Heart left ventricle (tissue), 16 donors: ENCODE measurements at regions of chr17 and their contacts with region 1.

Region 1: GRCh38 chr17:64968652-64969501 is 49.6 kb upstream of the LRRC37A3 start:
- DNase-seq: no peak
- ATAC-seq: no peak
- H3K4me3 ChIP-seq: no peak overlapping the region
- H3K27ac ChIP-seq: peak overlapping the region in 1 of 12 donors; percentile 74
- H3K4me1 ChIP-seq: peaks cover 0 to 33% (median 8%) of the 10 kb centered on the region in 12 donors
- H3K27me3 ChIP-seq: no peaks in the 10 kb centered on the region
- CTCF ChIP-seq: no peak
- POLR2A ChIP-seq: no peak

Region 2: DNA sequence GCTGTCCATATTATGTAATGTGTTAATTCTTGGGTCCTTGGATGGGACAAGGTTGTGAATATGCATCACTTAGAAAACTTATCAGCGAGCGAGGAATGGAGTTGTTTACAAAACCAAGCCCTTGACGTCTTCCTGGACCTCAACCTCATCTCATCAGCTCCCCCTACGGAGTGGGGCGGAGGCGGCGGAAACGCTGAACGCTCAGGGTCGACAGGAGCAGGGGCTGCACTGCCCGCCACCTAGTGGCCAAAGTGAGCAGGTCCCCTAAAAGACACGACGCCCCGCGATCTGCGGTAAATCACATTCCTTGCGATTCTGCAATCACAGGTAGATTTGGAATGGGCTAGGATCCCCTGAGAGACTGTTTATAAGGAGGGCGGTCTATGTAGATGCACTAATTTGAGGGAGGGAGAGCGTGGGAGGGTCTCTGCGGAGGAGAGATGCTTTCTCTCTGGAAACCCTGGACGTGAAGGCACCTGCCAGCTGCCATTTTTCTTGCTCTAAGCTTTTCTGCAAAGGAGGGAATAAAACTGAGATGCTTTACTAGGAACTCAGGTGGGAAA is 943.1 kb before region 1 on chr17:
- intact Hi-C with region 1: no loop called
- DNase-seq: peak; percentile 77 to 92 (median 82)
- ATAC-seq: peak; percentile 56 to 87 (median 82)
- H3K4me3 ChIP-seq: peak overlapping the region in 7 of 12 donors; percentile 0 to 37 (median 16)
- H3K27ac ChIP-seq: peak overlapping the region in 8 of 12 donors; percentile 3 to 77 (median 54)
- H3K4me1 ChIP-seq: peaks cover 0 to 33% (median 7%) of the 10 kb centered on the region in 12 donors
- H3K27me3 ChIP-seq: no peaks in the 10 kb centered on the region
- CTCF ChIP-seq: peak; percentile 90 to 99 (median 94)
- POLR2A ChIP-seq: no peak

Region 3: GRCh38 chr17:64773836-64774761 is 194.8 kb before region 1 on chr17:
- intact Hi-C with region 1: loop called in 1 of 10 experiments (anchors 5 kb)
- DNase-seq: peak in 2 of 5 donors; percentile 16 to 37
- ATAC-seq: peak in 1 of 4 donors; percentile 3
- H3K4me3 ChIP-seq: no peak overlapping the region
- H3K27ac ChIP-seq: no peak overlapping the region
- H3K4me1 ChIP-seq: peaks cover 0 to 34% (median 22%) of the 10 kb centered on the region in 12 donors
- H3K27me3 ChIP-seq: peaks cover 0 to 10% (median under 1%) of the 10 kb centered on the region in 9 donors
- CTCF ChIP-seq: peak in 6 of 12 donors; percentile 12 to 24 (median 15)
- POLR2A ChIP-seq: no peak

Region 4: GRCh38 chr17:64920026-64920418 is 48.9 kb before region 1 on chr17:
- intact Hi-C with region 1: loop called in 1 of 10 experiments (anchors 5 kb)
- DNase-seq: peak in 2 of 5 donors; percentile 33 to 39
- ATAC-seq: peak in 3 of 4 donors; percentile 11 to 35 (median 23)
- H3K4me3 ChIP-seq: peak overlapping the region; percentile 60 to 88 (median 74)
- H3K27ac ChIP-seq: peak overlapping the region; percentile 80 to 97 (median 93)
- H3K4me1 ChIP-seq: peaks cover 0 to 16% (median 3%) of the 10 kb centered on the region in 12 donors
- H3K27me3 ChIP-seq: no peaks in the 10 kb centered on the region
- CTCF ChIP-seq: no peak
- POLR2A ChIP-seq: no peak

Region 5: GRCh38 chr17:65109990-65110680 is 141.3 kb after region 1 on chr17:
- intact Hi-C with region 1: loop called in 4 of 10 experiments (anchors 5 to 10 kb)
- DNase-seq: no peak
- ATAC-seq: no peak
- H3K4me3 ChIP-seq: no peak overlapping the region
- H3K27ac ChIP-seq: no peak overlapping the region
- H3K4me1 ChIP-seq: peaks cover 0 to 21% (median 10%) of the 10 kb centered on the region in 12 donors
- H3K27me3 ChIP-seq: no peaks in the 10 kb centered on the region
- CTCF ChIP-seq: no peak
- POLR2A ChIP-seq: no peak